ENCODE measurements at regions of chr9 and their contacts with region 1.

Region 1: DNA sequence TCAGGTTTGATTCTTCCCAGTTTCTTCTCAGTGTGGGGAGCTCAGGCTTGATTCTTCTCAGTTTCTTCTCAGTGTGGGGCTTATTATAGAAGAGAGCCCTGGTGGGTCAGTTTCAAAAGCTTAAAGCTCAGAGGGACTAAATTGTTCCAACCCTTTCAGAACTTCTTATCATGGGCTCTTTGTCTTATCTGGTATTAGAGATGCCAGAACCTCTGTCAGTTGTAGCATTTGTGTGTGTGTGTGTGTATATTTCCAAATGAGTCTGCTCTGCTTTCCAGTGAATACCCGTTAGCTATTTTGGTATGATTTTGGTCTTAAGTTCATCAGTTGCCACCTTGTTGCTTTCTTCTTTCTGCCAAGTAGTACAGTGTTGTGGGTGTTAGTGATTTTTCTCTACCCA is 21.8 kb downstream of the TMEM38B start:
- DNase-seq: no peak
- ATAC-seq: no peak
- H3K4me3 ChIP-seq: no peak overlapping the region
- H3K27ac ChIP-seq: peak overlapping the region; percentile 12
- H3K4me1 ChIP-seq: peaks cover 21% of the 10 kb centered on the region
- H3K27me3 ChIP-seq: no peaks in the 10 kb centered on the region
- CTCF ChIP-seq: no peak

Region 2: GRCh38 chr9:105475302-105475701 is 240.8 kb before region 1 on chr9:
- intact Hi-C with region 1: no loop called
- DNase-seq: no peak
- ATAC-seq: peak in 3 of 4 donors; percentile 65 to 74 (median 66)
- H3K4me3 ChIP-seq: no peak overlapping the region
- H3K27ac ChIP-seq: no peak overlapping the region
- H3K4me1 ChIP-seq: peaks cover 11% of the 10 kb centered on the region
- H3K27me3 ChIP-seq: no peaks in the 10 kb centered on the region
- CTCF ChIP-seq: peak; percentile 40

Region 3: DNA sequence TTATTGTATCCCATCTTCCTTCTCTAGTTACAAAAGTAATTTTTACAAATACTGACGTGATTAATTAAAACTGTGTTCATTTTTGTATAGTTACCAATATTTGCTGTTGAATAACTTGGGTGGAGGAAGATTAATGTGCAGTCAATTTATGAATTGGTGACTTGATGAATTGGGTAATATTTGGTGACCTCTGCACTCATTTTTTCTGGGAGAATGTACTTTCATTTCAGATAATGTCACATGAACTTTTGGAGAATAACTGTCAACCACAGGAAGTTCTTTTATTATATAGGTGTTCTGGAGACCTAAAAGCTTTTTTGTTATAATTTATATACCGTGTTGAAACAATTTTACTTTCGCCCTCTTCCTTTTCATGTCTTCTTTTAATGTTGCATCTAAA is 184.6 kb before region 1 on chr9:
- intact Hi-C with region 1: no loop called
- DNase-seq: no peak
- ATAC-seq: no peak
- H3K4me3 ChIP-seq: no peak overlapping the region
- H3K27ac ChIP-seq: no peak overlapping the region
- H3K4me1 ChIP-seq: no peaks in the 10 kb centered on the region
- H3K27me3 ChIP-seq: no peaks in the 10 kb centered on the region
- CTCF ChIP-seq: no peak

Region 4: DNA sequence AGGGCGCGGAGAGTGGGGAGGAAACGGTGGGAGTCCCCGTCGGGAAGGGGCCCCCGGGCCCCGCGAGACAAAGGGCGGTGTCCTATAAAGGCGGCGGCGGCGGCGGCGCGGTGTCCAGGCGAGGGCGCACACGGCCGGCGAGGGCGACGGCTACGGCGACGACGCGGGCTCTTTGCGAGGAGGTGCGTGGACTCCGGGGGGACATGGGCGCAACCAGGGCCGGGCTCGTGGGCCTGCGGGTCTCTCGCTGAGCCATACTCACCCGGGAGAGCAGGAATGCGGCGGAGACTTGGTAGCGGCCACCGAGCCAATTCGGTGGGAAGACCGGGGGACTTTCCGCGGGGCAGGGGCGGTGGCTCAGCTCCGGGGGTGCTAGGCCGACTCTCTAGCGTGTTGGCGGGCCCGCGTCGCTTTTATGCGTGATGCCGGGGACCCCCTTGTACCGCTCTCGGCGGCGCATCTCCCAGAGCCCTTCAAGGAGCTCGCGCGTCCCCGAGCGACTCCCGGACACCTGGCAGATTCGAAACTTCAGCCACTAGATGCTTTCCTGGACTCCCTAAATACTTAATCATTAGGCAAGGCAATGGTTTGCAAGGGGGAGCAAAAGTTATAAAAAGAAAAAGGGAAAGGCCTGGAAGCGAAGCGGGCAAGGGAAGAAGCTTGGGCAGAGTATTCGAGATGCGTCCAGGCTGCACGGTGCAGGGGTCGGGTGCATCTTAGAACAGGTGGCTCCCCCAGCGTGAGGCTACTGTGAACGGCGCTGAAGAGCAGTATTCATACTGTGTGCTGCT is 59.8 kb before region 1 on chr9:
- intact Hi-C with region 1: loop called (anchors 5 kb)
- DNase-seq: peak; percentile 36 to 80
- ATAC-seq: peak; percentile 90 to 98 (median 96)
- H3K4me3 ChIP-seq: peak overlapping the region; percentile 92
- H3K27ac ChIP-seq: peak overlapping the region; percentile 76
- H3K4me1 ChIP-seq: peaks cover 21% of the 10 kb centered on the region
- H3K27me3 ChIP-seq: no peaks in the 10 kb centered on the region
- CTCF ChIP-seq: peak; percentile 55

Region 5: GRCh38 chr9:105670315-105670714 is 45.8 kb before region 1 on chr9:
- intact Hi-C with region 1: no loop called
- DNase-seq: no peak
- ATAC-seq: no peak
- H3K4me3 ChIP-seq: no peak overlapping the region
- H3K27ac ChIP-seq: no peak overlapping the region
- H3K4me1 ChIP-seq: no peaks in the 10 kb centered on the region
- H3K27me3 ChIP-seq: no peaks in the 10 kb centered on the region
- CTCF ChIP-seq: no peak

Region 6: GRCh38 chr9:105681724-105682123 is 34.4 kb before region 1 on chr9:
- intact Hi-C with region 1: no loop called
- DNase-seq: no peak
- ATAC-seq: peak in 1 of 4 donors; percentile 47
- H3K4me3 ChIP-seq: no peak overlapping the region
- H3K27ac ChIP-seq: no peak overlapping the region
- H3K4me1 ChIP-seq: peaks cover 18% of the 10 kb centered on the region
- H3K27me3 ChIP-seq: no peaks in the 10 kb centered on the region
- CTCF ChIP-seq: no peak